ENCODE measurements at regions of chr9 and their contacts with region 1.

Region 1: DNA sequence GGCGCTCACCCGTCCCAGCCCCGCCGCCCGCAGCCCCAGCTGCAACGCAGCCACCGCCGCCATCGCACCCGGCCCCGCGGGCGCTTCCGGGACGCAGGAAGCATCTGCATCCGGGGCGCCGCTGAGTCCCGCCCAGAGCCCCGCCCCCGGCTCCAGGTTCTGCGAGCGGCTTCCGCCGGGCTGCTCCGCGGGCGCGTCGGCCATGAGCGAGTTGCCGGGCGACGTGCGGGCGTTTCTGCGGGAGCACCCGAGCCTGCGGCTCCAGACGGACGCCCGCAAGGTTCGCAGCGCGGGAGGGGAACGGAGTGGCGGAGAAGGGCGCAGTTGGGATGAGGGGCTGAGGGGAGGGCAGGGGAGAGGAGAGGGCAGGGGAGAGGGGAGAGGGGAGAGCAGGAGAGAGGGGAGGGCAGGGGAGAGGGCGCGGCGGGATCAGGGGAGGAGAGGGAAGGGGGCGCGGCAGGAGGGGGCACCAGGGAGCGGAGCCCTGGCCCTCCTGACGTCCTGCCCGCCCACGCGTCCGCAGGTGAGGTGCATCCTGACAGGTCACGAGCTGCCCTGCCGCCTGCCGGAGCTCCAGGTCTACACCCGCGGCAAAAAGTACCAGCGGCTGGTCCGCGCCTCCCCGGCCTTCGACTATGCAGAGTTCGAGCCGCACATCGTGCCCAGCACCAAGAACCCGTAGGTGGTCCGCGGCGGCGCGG is at the starts of genes SURF1 and SURF2:
- DNase-seq: peak; percentile 76 to 81
- ATAC-seq: peak; percentile 69 to 80
- H3K4me3 ChIP-seq: peak within 1 kb of the TSS; percentile 64
- H3K27ac ChIP-seq: peak within 1 kb of the TSS; percentile 82 to 94
- H3K4me1 ChIP-seq: peaks cover 14% of the 10 kb centered on the region; the same call in 1 of the 3 replicates
- CTCF ChIP-seq: no peak
- EP300 ChIP-seq: no peak
- POLR2A ChIP-seq: peak; percentile 88
- RAD21 ChIP-seq: no peak
- polyA plus RNA-seq, gene SURF1: 47.5 and 63.0 TPM in 2 replicates
- polyA plus RNA-seq, gene SURF2: 15.4 and 25.2 TPM in 2 replicates

Region 2: GRCh38 chr9:133342069-133342406 is 14.5 kb before region 1 on chr9:
- CTCF ChIA-PET with region 1: interaction called, 59 read pairs
- POLR2A ChIA-PET with region 1: interaction called, 27 read pairs
- DNase-seq: no peak
- ATAC-seq: peak; percentile 40 to 67; a peak in 4 of 6 replicates
- H3K4me3 ChIP-seq: no peak overlapping the region
- H3K27ac ChIP-seq: no peak overlapping the region
- H3K4me1 ChIP-seq: peaks cover 7% of the 10 kb centered on the region
- CTCF ChIP-seq: no peak; the same call in 2 of the 3 replicates
- EP300 ChIP-seq: no peak
- POLR2A ChIP-seq: no peak
- RAD21 ChIP-seq: no peak

Region 3: GRCh38 chr9:133371261-133371711 is 14.7 kb after region 1 on chr9:
- CTCF ChIA-PET with region 1: interaction called, 27 read pairs
- POLR2A ChIA-PET with region 1: interaction called, 5 read pairs
- DNase-seq: no peak
- ATAC-seq: no peak
- H3K4me3 ChIP-seq: no peak overlapping the region
- H3K27ac ChIP-seq: no peak overlapping the region
- H3K4me1 ChIP-seq: peaks cover 17% of the 10 kb centered on the region; the same call in 1 of the 3 replicates
- CTCF ChIP-seq: no peak
- EP300 ChIP-seq: no peak
- POLR2A ChIP-seq: no peak
- RAD21 ChIP-seq: no peak

Region 4: DNA sequence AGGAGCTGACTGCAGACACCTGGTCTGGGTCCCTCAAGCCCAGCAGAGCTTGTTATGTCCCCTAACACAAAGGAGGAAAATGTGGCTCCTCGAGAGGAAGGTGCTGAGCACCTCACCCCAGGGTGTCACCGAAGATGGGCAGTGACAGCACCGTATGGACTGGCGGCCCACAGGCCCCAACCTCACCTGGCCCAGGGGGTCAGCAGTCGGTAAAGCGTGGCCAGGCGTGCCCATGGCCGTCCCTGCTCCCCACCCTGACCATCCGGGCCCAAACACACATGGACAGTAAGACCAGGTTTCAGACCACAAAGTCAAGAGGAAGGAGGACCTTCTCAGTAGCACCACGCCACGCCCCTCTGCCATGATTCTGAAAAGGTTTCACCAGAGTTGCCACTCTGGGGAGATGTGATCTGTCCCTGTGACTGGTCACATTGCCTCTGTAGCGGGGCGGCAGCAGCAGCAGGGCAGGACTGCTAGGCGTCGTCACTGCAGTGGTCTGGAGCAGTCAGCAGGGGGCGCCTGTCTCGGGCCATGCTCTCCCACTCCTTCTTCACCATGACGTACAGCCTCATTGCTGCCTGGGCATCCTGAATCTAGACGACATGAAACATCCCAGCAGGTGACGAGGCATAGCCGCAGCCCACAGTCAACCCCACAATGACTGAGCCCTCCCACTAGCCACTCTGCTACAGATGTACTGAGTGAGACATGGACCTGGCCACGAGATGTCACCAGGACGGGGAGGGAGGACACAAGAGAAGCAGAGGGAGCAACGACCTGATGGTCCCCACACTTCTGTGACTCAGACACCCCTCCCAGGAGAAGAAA is 50.2 kb after region 1 on chr9:
- CTCF ChIA-PET with region 1: interaction called, 11 read pairs
- POLR2A ChIA-PET with region 1: no interaction called
- DNase-seq: peak; percentile 77 to 82
- ATAC-seq: peak; percentile 89 to 91
- H3K4me3 ChIP-seq: no peak overlapping the region
- H3K27ac ChIP-seq: no peak overlapping the region
- H3K4me1 ChIP-seq: no peaks in the 10 kb centered on the region
- CTCF ChIP-seq: peak; percentile 79
- EP300 ChIP-seq: no peak
- POLR2A ChIP-seq: no peak
- RAD21 ChIP-seq: peak; percentile 38 to 55; a peak in 4 of 5 replicates

Region 5: GRCh38 chr9:133845440-133845839 is 488.9 kb after region 1 on chr9:
- CTCF ChIA-PET with region 1: no interaction called
- POLR2A ChIA-PET with region 1: no interaction called
- DNase-seq: no peak
- ATAC-seq: peak in 1 of 2 experiments; percentile 23; a peak in 3 of 6 replicates
- H3K4me3 ChIP-seq: no peak overlapping the region
- H3K27ac ChIP-seq: peak overlapping the region in 1 of 2 experiments; percentile 14; a peak in 1 of 6 replicates
- H3K4me1 ChIP-seq: no peaks in the 10 kb centered on the region
- CTCF ChIP-seq: no peak
- EP300 ChIP-seq: no peak
- POLR2A ChIP-seq: no peak
- RAD21 ChIP-seq: no peak

Measured in A549 (cell line).